HepG2 (cell line): ENCODE measurements at regions of chr20 and their contacts with region 1.

Region 1: DNA sequence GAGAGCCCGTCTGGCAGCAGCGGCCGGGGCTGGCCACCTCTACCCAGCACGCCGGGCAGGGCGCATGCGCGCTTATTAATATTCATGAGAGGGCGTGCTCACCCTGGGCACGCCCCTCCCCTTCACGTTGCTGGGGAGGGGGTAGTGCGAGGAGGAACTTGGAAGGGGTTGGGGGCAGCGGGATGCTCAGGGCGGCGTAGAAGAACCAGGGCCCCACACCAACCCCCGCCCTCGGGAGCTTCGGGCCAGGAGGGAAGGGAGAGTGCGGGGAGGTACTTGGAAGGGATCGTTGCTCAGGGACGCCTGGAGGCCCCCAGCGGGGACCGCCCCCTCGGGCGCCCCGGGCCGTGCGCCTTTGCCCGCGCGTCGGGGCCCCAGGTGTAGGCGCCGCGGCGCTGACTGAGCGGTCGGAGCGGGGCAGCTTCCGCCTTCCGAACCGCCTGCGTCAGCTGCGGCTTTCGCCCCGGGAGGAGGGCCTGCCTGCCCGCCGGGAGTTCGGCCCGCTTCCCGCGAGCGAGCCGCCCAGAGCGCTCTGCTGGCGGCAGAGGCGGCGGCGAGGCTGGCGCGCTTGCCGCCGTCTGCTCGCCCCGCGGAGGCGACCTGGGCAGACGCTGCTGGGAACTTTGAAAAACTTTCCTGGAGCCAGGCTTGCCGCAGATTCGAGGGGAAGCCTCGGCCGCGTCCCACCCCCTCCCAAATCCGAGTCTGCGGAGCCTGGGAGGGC is at the start of gene JAG1:
- DNase-seq: peak; percentile 97
- ATAC-seq: peak; percentile 77
- H3K4me3 ChIP-seq: peak within 1 kb of the TSS; percentile 85 to 94 (median 91)
- H3K27ac ChIP-seq: peak within 1 kb of the TSS; percentile 89
- H3K4me1 ChIP-seq: peaks cover 37% of the 10 kb centered on the region
- H3K27me3 ChIP-seq: no peaks in the 10 kb centered on the region; a peak in 1 of 5 replicates
- CTCF ChIP-seq: peak; percentile 22; the same call in 1 of the 2 replicates
- EP300 ChIP-seq: peak in 1 of 2 experiments; percentile 46; a peak in 1 of 4 replicates
- POLR2A ChIP-seq: peak; percentile 82 to 85
- RAD21 ChIP-seq: peak; percentile 66
- total RNA-seq, gene JAG1: 18.1 and 56.3 TPM in 2 replicates

Region 2: DNA sequence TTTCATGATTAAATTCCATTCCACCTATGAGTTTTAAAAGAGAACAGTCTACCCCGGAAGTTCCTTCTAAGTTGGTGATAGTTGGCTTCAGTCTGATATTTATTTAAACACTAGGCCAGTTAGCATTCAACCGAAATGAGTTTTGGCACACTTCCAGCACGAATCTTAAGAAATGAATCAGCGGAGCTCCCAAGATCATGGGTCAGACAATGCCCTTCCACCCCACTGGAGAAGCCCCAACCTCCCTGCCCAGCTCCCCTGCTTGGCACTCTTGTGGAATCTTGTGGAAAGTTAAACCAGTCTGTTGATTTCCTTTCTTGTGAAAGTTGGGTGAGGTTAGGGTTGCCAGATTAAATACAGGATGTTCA is 304.4 kb before region 1 on chr20:
- CTCF ChIA-PET with region 1: no interaction called
- POLR2A ChIA-PET with region 1: interaction called, 5 read pairs
- in situ Hi-C with region 1: no loop called
- intact Hi-C with region 1: loop called (anchors 5 kb)
- DNase-seq: no peak
- ATAC-seq: peak; percentile 14
- H3K4me3 ChIP-seq: peak overlapping the region; percentile 2 to 54 (median 28); a peak in 4 of 6 replicates
- H3K27ac ChIP-seq: peak overlapping the region; percentile 70
- H3K4me1 ChIP-seq: peaks cover 76% of the 10 kb centered on the region
- H3K27me3 ChIP-seq: no peaks in the 10 kb centered on the region
- CTCF ChIP-seq: no peak
- EP300 ChIP-seq: no peak
- POLR2A ChIP-seq: no peak
- RAD21 ChIP-seq: no peak

Region 3: GRCh38 chr20:10603971-10604864 is 69.9 kb before region 1 on chr20:
- CTCF ChIA-PET with region 1: no interaction called
- POLR2A ChIA-PET with region 1: interaction called, 43 read pairs
- in situ Hi-C with region 1: no loop called
- intact Hi-C with region 1: loop called (anchors 2 kb)
- DNase-seq: peak; percentile 99
- ATAC-seq: peak; percentile 100
- H3K4me3 ChIP-seq: peak overlapping the region; percentile 6 to 54 (median 9); a peak in 3 of 6 replicates
- H3K27ac ChIP-seq: peak overlapping the region; percentile 76
- H3K4me1 ChIP-seq: peaks cover 31% of the 10 kb centered on the region
- H3K27me3 ChIP-seq: no peaks in the 10 kb centered on the region
- CTCF ChIP-seq: peak; percentile 61
- EP300 ChIP-seq: peak; percentile 87 to 97; a peak in 3 of 4 replicates
- POLR2A ChIP-seq: peak; percentile 62 to 83
- RAD21 ChIP-seq: peak; percentile 60; the same call in 1 of the 2 replicates

Region 4: DNA sequence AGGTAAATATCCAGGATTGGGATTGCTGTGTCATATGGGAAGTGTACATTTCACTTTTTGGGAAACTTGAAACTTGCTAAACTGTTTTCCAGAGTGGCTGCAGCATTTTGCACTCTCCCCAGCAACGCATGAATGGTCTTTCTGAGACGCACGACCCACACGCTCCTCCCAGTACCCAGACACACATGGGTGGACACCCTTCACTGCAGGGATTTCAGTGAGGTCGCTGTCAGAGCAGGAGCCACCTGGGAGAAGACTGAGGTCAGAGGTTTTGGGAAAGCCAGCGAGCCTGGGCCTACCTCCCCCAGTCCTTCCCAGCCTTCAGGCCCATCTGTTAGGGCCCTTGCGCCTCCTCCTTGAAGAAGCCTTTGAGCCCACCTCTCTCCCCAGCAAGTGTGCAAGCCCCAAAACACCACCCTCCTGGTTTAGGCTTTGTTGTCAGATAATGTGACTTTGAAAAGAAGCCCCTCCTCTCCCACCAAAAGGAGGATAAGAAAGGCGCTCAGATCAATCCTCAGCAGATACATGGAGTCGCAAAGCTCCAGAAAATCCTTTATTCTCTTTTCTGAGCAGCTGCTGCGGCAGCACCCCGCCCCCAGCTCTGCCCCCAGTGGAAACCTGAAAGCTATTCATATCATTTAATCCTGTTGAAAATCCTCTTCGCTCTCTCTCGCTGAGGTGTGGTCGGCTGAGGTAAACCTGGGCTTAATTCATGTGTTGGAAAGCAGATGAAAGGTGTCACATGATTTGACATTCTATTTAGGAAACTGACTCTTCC is 12.4 kb after region 1 on chr20:
- CTCF ChIA-PET with region 1: no interaction called
- POLR2A ChIA-PET with region 1: interaction called, 16 read pairs
- in situ Hi-C with region 1: no loop called
- intact Hi-C with region 1: no loop called
- DNase-seq: no peak
- ATAC-seq: no peak
- H3K4me3 ChIP-seq: no peak overlapping the region
- H3K27ac ChIP-seq: no peak overlapping the region
- H3K4me1 ChIP-seq: peaks cover 32% of the 10 kb centered on the region
- H3K27me3 ChIP-seq: no peaks in the 10 kb centered on the region
- CTCF ChIP-seq: no peak
- EP300 ChIP-seq: no peak
- POLR2A ChIP-seq: no peak
- RAD21 ChIP-seq: no peak

Region 5: DNA sequence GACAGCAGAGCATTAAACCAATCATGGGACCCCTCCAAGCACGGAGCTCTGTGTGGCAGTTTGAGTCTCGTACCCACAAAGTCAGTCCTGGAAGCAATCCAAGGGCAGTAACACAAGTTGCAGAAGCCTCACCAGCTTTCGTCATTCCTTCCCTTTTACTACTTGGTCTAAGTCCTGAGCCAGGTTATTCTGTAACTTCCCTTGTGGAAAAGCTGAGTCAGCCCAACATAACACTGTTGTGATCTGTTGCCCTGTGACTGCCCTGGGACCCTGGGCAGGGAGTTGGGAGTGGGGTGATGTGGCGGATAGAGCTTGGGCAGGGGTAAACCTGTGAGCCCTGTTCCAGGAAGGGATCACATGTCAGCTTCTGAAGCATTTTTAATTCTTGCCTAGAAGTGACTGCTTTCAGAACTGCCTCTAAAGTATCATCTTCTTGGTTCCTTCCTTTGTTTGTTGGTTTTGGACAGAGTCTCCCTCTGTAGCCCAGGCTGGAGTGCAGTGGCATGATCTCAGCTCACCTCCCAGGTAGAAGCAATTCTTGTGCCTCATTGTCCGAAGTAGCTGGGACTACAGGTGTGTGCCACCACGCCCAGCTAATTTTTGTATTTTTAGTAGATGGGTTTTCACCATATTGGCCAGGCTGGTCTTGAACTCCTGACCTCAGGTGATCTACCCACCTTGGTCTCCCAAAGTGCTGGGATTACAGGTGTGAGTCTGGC is 183.4 kb after region 1 on chr20:
- CTCF ChIA-PET with region 1: no interaction called
- POLR2A ChIA-PET with region 1: no interaction called
- in situ Hi-C with region 1: no loop called
- intact Hi-C with region 1: loop called (anchors 2 kb)
- DNase-seq: peak; percentile 58
- ATAC-seq: peak; percentile 70
- H3K4me3 ChIP-seq: no peak overlapping the region
- H3K27ac ChIP-seq: no peak overlapping the region
- H3K4me1 ChIP-seq: peaks cover 34% of the 10 kb centered on the region
- H3K27me3 ChIP-seq: no peaks in the 10 kb centered on the region
- CTCF ChIP-seq: no peak
- EP300 ChIP-seq: no peak
- POLR2A ChIP-seq: no peak
- RAD21 ChIP-seq: no peak

Region 6: GRCh38 chr20:11267131-11267761 is 593.1 kb after region 1 on chr20:
- CTCF ChIA-PET with region 1: no interaction called
- POLR2A ChIA-PET with region 1: interaction called, 4 read pairs
- in situ Hi-C with region 1: loop called (anchors 5 kb)
- intact Hi-C with region 1: loop called (anchors 1 kb)
- DNase-seq: peak; percentile 79
- ATAC-seq: peak; percentile 78
- H3K4me3 ChIP-seq: no peak overlapping the region
- H3K27ac ChIP-seq: no peak overlapping the region
- H3K4me1 ChIP-seq: peaks cover 14% of the 10 kb centered on the region
- H3K27me3 ChIP-seq: peaks cover 0 to 6% of the 10 kb centered on the region in 2 experiments; a peak in 1 of 5 replicates
- CTCF ChIP-seq: no peak
- EP300 ChIP-seq: peak in 1 of 2 experiments; percentile 56; a peak in 1 of 4 replicates
- POLR2A ChIP-seq: no peak
- RAD21 ChIP-seq: no peak